ENCODE measurements at regions of chr15 and their contacts with region 1.

Region 1: DNA sequence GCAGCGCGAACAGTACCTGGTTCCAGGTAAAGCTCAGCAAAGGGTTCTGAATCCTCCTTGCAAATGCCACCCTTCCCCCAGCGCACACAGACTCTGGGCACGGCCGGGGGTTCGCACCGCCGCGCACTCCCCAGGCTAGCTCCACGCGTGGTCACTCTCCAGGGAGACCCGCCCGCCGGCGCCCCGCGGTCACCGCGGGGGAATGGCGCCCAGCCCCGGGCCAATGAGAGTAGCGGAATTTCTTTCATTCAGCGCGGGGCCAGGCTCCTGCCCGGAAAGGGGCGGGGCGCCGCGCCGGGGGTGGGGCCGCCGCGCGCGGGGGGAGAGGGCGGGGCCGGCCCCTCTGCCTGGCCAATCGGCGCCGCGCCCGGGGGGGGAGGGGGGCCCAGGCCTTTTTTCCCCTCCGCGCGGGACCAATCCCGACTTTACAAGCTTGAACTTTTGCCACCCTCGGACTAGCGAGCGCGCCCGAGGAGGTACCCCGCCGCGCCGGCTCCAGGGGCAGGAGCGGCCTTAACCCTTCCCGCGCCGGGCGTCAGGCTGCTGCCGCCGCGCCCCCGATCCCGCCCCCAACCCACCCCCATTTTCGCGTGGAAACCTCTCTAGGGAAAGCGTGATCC is 1.1 kb upstream of the SMAD6 start:
- DNase-seq: peak; percentile 66 to 91 (median 83)
- ATAC-seq: peak; percentile 92
- H3K4me3 ChIP-seq: peak overlapping the region; percentile 76
- H3K4me3 Mint-ChIP-seq: peak overlapping the region; percentile 87 to 95 (median 93)
- H3K27ac ChIP-seq: peak overlapping the region; percentile 66
- H3K27ac Mint-ChIP-seq: peak overlapping the region in 8 of 9 donors; percentile 18 to 92 (median 78)
- H3K4me1 ChIP-seq: peaks cover 6 to 13% of the 10 kb centered on the region in 2 donors
- H3K4me1 Mint-ChIP-seq: peaks cover 10 to 25% (median 19%) of the 10 kb centered on the region in 7 donors
- H3K27me3 ChIP-seq: peaks cover 5 to 7% of the 10 kb centered on the region in 2 donors
- H3K27me3 Mint-ChIP-seq: peaks cover 6 to 26% (median 17%) of the 10 kb centered on the region in 5 donors

Region 2: GRCh38 chr15:66504563-66505429 is 196.1 kb before region 1 on chr15 and contains the starts of genes RPL4 and ZWILCH:
- CTCF ChIA-PET with region 1: no interaction called
- POLR2A ChIA-PET with region 1: no interaction called
- intact Hi-C with region 1: loop called in 1 of 2 experiments (anchors 5 kb)
- DNase-seq: peak; percentile 65 to 88 (median 83)
- ATAC-seq: peak; percentile 93
- H3K4me3 ChIP-seq: peak within 1 kb of the TSS; percentile 99
- H3K4me3 Mint-ChIP-seq: peak within 1 kb of the TSS; percentile 90 to 100 (median 100)
- H3K27ac ChIP-seq: peak within 1 kb of the TSS; percentile 93
- H3K27ac Mint-ChIP-seq: peak within 1 kb of the TSS; percentile 92 to 100 (median 99)
- H3K4me1 ChIP-seq: peaks cover 13 to 22% of the 10 kb centered on the region in 2 donors
- H3K4me1 Mint-ChIP-seq: peaks cover 21 to 57% (median 41%) of the 10 kb centered on the region in 7 donors
- H3K27me3 ChIP-seq: no peaks in the 10 kb centered on the region
- H3K27me3 Mint-ChIP-seq: no peaks in the 10 kb centered on the region
- total RNA-seq, gene RPL4: 2,229 to 4,292 (median 4,136) TPM
- total RNA-seq, gene ZWILCH: 5.6 to 20.3 (median 6.8) TPM

Region 3: DNA sequence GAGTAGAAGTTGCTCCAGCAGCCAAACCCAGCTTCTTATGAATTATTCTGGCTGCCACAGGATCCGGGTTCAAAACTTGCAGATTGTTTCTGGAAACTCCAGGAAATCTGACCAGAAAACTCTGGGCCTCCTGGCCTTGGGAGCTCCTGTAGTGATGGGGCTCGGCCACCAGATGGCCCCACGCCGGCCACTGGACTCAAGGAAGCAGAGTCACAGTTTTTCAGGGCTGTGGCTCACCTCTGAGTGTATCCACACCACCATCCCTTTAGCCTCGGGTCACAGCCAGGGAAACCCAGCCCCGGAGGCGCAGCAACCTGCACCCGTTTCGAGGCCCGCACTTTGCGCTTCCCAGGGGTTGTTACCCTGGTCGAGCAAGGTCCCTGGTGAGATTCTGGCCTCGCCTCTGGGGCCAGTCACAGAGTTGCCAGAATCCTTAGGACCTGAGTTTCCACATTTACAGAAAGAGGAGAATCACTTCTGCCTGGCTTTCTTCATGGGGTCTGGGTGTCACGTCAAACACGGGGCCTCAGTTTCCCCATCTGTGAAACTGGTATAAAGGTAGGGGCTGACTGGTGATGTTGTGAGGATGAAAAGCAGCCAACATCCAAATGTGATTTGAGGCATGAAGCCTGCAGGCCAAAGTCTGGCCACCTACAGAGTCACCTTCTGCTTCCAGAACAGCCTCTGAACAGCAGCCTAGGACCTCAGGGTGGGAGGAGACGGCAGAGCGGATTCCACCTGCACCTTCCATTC is 81.6 kb before region 1 on chr15:
- CTCF ChIA-PET with region 1: interaction called, 3 read pairs
- POLR2A ChIA-PET with region 1: no interaction called
- intact Hi-C with region 1: loop called (anchors 1 to 5 kb)
- DNase-seq: peak in 8 of 9 donors; percentile 3 to 56 (median 32)
- ATAC-seq: peak; percentile 56
- H3K4me3 ChIP-seq: no peak overlapping the region
- H3K4me3 Mint-ChIP-seq: no peak overlapping the region
- H3K27ac ChIP-seq: no peak overlapping the region
- H3K27ac Mint-ChIP-seq: no peak overlapping the region
- H3K4me1 ChIP-seq: no peaks in the 10 kb centered on the region
- H3K4me1 Mint-ChIP-seq: peaks cover 0 to 21% (median 5%) of the 10 kb centered on the region in 7 donors
- H3K27me3 ChIP-seq: peaks cover 0 to 15% of the 10 kb centered on the region in 2 donors
- H3K27me3 Mint-ChIP-seq: peaks cover 23 to 33% (median 32%) of the 10 kb centered on the region in 5 donors

Region 4: GRCh38 chr15:66638377-66638776 is 62.5 kb before region 1 on chr15:
- CTCF ChIA-PET with region 1: no interaction called
- POLR2A ChIA-PET with region 1: interaction called, 3 read pairs
- intact Hi-C with region 1: loop called in 1 of 2 experiments (anchors 1 kb)
- DNase-seq: peak in 4 of 9 donors; percentile 4 to 46 (median 24)
- ATAC-seq: no peak
- H3K4me3 ChIP-seq: no peak overlapping the region
- H3K4me3 Mint-ChIP-seq: peak overlapping the region in 2 of 10 donors; percentile 37 to 66
- H3K27ac ChIP-seq: no peak overlapping the region
- H3K27ac Mint-ChIP-seq: peak overlapping the region in 3 of 9 donors; percentile 0 to 63 (median 39)
- H3K4me1 ChIP-seq: peaks cover 0 to 6% of the 10 kb centered on the region in 2 donors
- H3K4me1 Mint-ChIP-seq: peaks cover 4 to 13% (median 10%) of the 10 kb centered on the region in 7 donors
- H3K27me3 ChIP-seq: no peaks in the 10 kb centered on the region
- H3K27me3 Mint-ChIP-seq: peaks cover 0 to 4% (median 0%) of the 10 kb centered on the region in 5 donors

Region 5: DNA sequence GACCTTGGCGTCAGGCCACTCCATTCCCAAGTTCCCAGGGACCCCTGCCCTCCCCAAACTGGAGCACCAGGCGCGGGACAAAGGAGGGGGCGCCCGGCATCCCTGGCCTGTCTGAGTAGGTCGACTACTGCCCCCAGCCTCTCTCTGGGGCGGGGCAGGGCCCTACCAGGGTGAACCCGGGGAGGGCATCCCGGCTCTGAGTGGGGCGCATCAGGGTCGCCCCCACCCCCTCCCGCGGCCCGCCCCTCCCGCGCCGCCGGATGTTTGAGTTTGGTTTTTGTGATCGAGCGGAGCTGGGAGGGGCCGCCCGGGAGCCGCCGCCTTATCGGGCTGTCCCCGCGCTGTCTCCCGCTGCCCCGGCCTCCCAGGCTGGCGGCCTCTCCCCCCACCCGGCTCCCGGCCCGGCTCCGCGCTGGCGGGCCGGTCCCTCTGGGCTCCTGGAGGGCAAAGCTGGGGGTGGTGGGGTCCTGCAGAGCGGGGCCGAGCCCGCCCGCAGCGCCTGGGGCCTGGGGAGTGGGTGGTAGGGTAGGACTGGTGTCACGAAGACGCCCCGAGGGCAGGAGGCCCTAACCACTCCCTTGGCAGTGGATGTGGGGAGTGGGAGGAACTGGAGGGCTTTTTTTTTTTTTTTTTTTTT is 46.1 kb before region 1 on chr15:
- CTCF ChIA-PET with region 1: no interaction called
- POLR2A ChIA-PET with region 1: interaction called, 4 read pairs
- intact Hi-C with region 1: loop called (anchors 1 to 5 kb)
- DNase-seq: peak in 7 of 9 donors; percentile 21 to 57 (median 30)
- ATAC-seq: peak; percentile 42
- H3K4me3 ChIP-seq: peak overlapping the region; percentile 24
- H3K4me3 Mint-ChIP-seq: peak overlapping the region in 7 of 10 donors; percentile 57 to 74 (median 67)
- H3K27ac ChIP-seq: peak overlapping the region; percentile 56
- H3K27ac Mint-ChIP-seq: peak overlapping the region in 1 of 9 donors; percentile 55
- H3K4me1 ChIP-seq: peaks cover 0 to 4% of the 10 kb centered on the region in 2 donors
- H3K4me1 Mint-ChIP-seq: peaks cover 0 to 18% (median 10%) of the 10 kb centered on the region in 7 donors
- H3K27me3 ChIP-seq: no peaks in the 10 kb centered on the region
- H3K27me3 Mint-ChIP-seq: peaks cover 0 to 17% (median 0%) of the 10 kb centered on the region in 5 donors

Region 6: DNA sequence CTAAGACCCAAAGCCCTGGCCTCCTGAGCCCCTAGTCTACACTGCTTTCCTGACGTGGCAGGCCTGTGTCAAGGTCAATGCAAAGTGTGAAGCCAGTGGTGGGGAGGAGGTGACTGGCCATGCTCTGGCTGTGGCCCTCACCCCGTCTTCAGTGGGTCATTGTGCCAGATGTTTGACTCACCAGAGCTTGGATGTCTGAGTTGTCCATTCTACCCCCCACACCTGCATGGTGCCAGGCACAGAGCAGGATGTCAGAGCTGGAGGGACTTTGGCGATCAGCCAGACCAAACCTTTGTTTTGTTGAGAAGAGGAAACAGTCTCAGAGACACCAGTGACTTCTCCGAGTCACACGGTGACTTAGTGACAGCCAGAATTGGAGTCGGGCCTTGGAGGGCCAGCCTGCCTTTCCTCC is 50.6 kb after region 1 on chr15:
- CTCF ChIA-PET with region 1: no interaction called
- POLR2A ChIA-PET with region 1: no interaction called
- intact Hi-C with region 1: loop called in 1 of 2 experiments (anchors 2 kb)
- DNase-seq: peak in 5 of 9 donors; percentile 26 to 48 (median 27)
- ATAC-seq: no peak
- H3K4me3 ChIP-seq: no peak overlapping the region
- H3K4me3 Mint-ChIP-seq: peak overlapping the region in 2 of 10 donors; percentile 12 to 47
- H3K27ac ChIP-seq: peak overlapping the region; percentile 20
- H3K27ac Mint-ChIP-seq: peak overlapping the region in 5 of 9 donors; percentile 12 to 77 (median 70)
- H3K4me1 ChIP-seq: peaks cover 0 to 4% of the 10 kb centered on the region in 2 donors
- H3K4me1 Mint-ChIP-seq: peaks cover 0 to 22% (median 12%) of the 10 kb centered on the region in 7 donors
- H3K27me3 ChIP-seq: no peaks in the 10 kb centered on the region
- H3K27me3 Mint-ChIP-seq: peaks cover 0 to 9% (median 0%) of the 10 kb centered on the region in 5 donors

Measured in naive thymus-derived CD4-positive, alpha-beta T cell (primary cell).